ENCODE measurements at regions of chr6 and their contacts with region 1.

Region 1: GRCh38 chr6:1607516-1608221 is 2.0 kb upstream of the FOXC1 start:
- DNase-seq: peak; percentile 83
- ATAC-seq: peak; percentile 12
- H3K4me3 Mint-ChIP-seq: peak overlapping the region; percentile 68
- H3K27ac Mint-ChIP-seq: peak overlapping the region; percentile 95
- H3K4me1 Mint-ChIP-seq: peaks cover 45% of the 10 kb centered on the region
- H3K27me3 Mint-ChIP-seq: peaks cover 83% of the 10 kb centered on the region
- CTCF ChIP-seq: no peak

Region 2: DNA sequence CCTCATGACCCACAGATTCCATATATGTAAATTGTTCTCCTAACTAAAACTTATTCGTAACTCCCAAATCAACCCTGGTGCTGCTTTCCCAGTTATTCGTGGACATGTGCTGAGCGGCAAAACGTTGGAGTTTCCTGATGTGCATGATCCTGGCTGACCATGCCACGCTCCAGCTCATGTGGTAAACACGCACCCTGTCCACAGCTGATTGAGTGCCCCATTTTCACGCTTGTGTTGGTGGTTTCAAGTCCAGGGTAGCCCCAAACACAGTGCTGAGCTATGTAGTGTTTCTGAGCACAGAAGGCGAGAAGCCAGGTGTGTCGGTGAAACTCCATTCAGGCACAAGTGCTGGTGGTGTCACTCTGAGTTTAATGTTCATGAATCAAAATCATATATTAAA is 17.1 kb before region 1 on chr6:
- CTCF ChIA-PET with region 1: no interaction called
- POLR2A ChIA-PET with region 1: no interaction called
- DNase-seq: no peak
- ATAC-seq: no peak
- H3K4me3 Mint-ChIP-seq: no peak overlapping the region
- H3K27ac Mint-ChIP-seq: no peak overlapping the region
- H3K4me1 Mint-ChIP-seq: no peaks in the 10 kb centered on the region; the same call in 1 of the 2 replicates
- H3K27me3 Mint-ChIP-seq: peaks cover 7% of the 10 kb centered on the region
- CTCF ChIP-seq: no peak

Region 3: GRCh38 chr6:1619673-1620503 is 12.2 kb after region 1 on chr6:
- CTCF ChIA-PET with region 1: interaction called, 30 read pairs
- POLR2A ChIA-PET with region 1: interaction called, 3 read pairs
- DNase-seq: peak; percentile 70
- ATAC-seq: peak; percentile 53
- H3K4me3 Mint-ChIP-seq: peak overlapping the region; percentile 45
- H3K27ac Mint-ChIP-seq: no peak overlapping the region
- H3K4me1 Mint-ChIP-seq: peaks cover 41% of the 10 kb centered on the region
- H3K27me3 Mint-ChIP-seq: peaks cover 99% of the 10 kb centered on the region
- CTCF ChIP-seq: no peak

Region 4: DNA sequence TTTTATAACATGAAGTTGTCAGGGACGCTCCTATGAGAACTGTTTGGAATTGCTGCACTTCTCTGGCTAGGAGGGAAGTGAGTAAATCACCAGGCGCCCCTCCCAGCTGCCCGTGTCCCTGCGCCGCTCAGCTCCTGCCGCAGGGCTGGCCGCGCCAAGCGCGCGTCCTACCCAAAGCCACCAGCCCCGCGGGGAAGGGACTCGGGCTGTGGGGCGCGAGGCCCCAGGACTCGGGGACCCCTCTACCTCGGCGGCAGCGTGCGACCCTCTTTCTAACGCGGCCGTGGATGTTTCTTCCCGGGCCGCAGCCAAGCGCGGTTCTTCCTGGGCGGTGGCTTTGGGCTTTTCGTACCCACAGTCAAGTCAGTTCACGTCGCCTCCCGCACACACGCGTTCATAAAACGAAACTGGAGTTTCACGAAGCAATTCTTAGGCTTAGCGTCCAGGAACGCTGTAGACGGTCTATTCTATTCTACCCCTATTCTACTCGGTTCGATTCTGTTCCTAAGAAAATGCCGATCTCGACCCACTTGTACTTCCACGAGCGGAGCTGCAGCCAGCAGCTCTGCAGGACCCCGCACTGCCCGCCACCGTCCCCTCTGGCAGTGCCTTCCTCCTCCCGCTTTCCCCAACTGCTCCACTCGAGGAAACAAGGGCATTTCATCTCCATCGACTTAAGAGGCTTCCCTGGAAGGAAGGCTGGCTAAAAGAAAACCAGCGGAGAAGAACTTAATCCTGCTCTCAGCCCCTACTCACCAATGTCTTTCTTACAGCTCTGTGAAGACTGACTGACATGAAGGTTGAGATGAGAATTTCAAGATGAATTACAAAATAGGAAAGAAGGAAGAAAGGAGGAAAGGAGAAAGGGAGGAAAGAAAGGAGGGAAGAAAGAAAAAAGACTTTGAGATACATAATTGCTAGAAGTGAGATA is 17.4 kb after region 1 on chr6:
- CTCF ChIA-PET with region 1: interaction called, 30 read pairs
- POLR2A ChIA-PET with region 1: interaction called, 3 read pairs
- DNase-seq: no peak
- ATAC-seq: peak; percentile 8
- H3K4me3 Mint-ChIP-seq: peak overlapping the region; percentile 63
- H3K27ac Mint-ChIP-seq: no peak overlapping the region
- H3K4me1 Mint-ChIP-seq: peaks cover 28% of the 10 kb centered on the region
- H3K27me3 Mint-ChIP-seq: peaks cover 97% of the 10 kb centered on the region
- CTCF ChIP-seq: no peak

Region 5: DNA sequence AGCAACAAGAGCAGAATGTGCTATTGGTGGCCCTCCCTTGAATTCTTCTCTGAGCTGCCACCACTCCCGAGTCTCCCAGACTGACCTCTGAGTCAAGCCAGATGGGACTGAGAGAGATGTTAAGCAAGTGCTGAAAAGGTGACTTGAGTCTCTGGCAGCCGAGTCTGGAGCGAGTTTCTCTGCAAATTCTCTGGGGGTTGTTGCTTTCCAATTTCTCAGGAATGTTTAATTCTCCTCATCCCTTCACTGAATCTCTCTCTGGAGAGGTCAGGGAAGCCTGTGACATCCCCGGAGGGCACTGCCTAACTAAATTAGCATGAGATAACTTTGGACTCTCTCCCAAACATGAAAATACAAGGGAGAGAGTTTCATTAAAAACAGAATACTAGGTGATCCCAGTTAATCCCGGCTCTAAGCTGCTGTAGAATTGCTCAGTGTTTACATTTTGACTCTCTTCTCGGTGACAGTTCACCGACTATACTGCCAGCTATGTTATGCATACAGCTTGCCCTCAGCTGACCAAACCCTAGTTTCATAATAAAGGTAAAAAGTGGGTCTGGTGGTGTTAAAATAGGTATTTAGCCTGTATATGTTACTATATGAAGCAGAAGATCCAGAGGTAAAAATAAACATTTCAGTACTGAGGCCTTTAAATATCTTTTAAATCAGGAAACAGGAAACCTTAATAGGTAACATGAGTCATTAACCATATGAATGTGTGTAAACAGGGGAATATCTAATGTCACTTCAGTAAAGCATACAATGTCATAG is 160.0 kb after region 1 on chr6:
- CTCF ChIA-PET with region 1: no interaction called
- POLR2A ChIA-PET with region 1: no interaction called
- DNase-seq: no peak
- ATAC-seq: no peak
- H3K4me3 Mint-ChIP-seq: no peak overlapping the region
- H3K27ac Mint-ChIP-seq: no peak overlapping the region; the same call in 1 of the 2 replicates
- H3K4me1 Mint-ChIP-seq: peaks cover 9% of the 10 kb centered on the region
- H3K27me3 Mint-ChIP-seq: no peaks in the 10 kb centered on the region
- CTCF ChIP-seq: no peak